ENCODE measurements at regions of chr1 and their contacts with region 1.

Region 1: DNA sequence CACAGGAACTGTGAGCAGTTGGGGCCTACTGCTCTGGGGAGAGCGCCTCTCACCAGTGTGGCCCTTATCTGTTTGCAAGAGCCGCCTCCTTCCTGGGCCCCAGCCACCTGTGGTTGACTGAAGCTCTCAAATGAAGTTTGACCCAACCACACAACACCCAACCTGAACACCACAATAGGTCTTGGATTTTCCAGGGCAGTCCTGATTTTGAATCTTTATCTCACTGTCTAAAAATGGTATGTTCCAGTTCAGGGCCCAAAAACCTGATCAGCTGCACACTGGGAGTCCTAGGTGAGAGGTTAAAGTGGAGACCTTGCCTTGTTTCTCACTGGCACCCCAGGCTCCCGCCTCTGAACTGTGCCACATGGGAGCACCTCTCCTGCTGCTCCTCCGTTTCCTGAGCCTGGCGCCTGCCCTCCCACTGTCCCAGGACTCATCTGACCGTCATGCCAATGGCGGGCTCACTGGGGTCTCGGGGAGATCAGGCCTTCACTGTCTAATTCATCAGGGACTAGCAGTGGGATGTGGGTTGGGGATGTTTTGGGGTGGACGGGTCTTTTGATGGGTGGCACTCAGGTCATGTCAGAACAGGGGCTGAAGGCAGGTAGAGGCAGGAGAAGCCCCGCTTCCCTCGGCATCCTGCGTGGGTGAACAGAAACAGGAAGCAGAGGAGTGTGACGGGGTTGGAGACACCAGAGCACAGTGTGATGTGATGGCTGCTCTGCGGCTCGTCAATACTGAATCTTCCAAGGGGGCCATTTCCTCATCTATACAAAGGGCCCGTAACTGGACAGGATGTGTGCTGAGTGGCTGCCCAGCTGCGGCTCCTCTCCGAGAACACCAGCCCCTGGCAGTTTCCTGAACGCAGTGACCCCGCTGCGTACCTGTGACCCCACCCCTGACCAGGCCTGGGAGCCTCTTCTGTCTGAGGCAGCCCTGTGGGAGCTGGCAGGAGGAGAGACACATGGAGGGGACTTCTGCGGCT is 59.6 kb upstream of the ITPKB start:
- DNase-seq: peak; percentile 89
- H3K4me3 Mint-ChIP-seq: peak overlapping the region; percentile 69
- H3K27ac Mint-ChIP-seq: peak overlapping the region; percentile 94
- H3K4me1 Mint-ChIP-seq: peaks cover 30% of the 10 kb centered on the region
- H3K27me3 Mint-ChIP-seq: peaks cover 12% of the 10 kb centered on the region

Region 2: GRCh38 chr1:226763905-226764264 is 34.8 kb before region 1 on chr1:
- intact Hi-C with region 1: loop called (anchors 5 kb)
- DNase-seq: no peak
- H3K4me3 Mint-ChIP-seq: no peak overlapping the region
- H3K27ac Mint-ChIP-seq: no peak overlapping the region
- H3K4me1 Mint-ChIP-seq: peaks cover 19% of the 10 kb centered on the region
- H3K27me3 Mint-ChIP-seq: peaks cover 14% of the 10 kb centered on the region